Aorta (tissue), 5 donors: ENCODE measurements at regions of chr1 and their contacts with region 1.

Region 1: DNA sequence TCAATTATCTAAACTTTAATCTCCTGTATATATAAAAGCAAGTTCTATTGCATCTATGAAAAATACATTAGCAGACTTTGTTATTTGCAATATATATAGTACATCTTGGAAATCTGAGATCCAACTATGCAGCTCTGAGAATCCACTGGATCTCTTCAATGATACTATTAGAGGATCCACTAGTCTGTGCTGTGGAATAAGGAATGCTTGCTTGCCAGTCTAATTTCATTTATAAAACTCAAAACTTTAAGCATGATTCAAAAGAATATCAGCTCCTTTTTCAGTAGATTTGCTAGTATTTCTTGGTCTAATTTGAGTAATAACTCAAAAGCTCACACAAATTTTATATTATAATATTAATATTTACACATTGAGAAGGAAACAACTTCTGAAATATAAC is 115.1 kb downstream of the SPATA6 start:
- DNase-seq: no peak
- ATAC-seq: no peak
- H3K4me3 ChIP-seq: no peak overlapping the region
- H3K27ac ChIP-seq: no peak overlapping the region
- H3K4me1 ChIP-seq: no peaks in the 10 kb centered on the region
- H3K27me3 ChIP-seq: no peaks in the 10 kb centered on the region

Region 2: DNA sequence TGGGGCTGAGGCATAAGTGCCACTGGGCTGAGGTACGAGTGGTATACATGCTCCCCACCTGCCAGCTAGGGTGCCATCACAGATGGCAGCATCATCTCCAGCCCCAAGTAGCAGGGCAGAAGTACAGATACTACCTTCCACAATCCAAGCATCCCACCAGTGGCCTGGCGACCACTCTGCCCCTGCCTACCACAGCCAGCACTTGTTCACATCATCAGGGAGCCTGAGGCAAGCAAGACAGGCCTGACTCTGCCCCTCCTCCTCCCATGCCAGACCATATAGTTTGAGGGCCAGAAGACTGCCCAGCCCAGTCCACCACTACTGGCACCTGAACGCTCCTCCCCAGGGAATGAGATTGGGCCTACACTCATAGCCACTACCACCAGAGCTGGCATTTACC is 30.5 kb after region 1 on chr1:
- intact Hi-C with region 1: no loop called
- DNase-seq: no peak
- ATAC-seq: no peak
- H3K4me3 ChIP-seq: no peak overlapping the region
- H3K27ac ChIP-seq: no peak overlapping the region
- H3K4me1 ChIP-seq: no peaks in the 10 kb centered on the region
- H3K27me3 ChIP-seq: no peaks in the 10 kb centered on the region

Region 3: DNA sequence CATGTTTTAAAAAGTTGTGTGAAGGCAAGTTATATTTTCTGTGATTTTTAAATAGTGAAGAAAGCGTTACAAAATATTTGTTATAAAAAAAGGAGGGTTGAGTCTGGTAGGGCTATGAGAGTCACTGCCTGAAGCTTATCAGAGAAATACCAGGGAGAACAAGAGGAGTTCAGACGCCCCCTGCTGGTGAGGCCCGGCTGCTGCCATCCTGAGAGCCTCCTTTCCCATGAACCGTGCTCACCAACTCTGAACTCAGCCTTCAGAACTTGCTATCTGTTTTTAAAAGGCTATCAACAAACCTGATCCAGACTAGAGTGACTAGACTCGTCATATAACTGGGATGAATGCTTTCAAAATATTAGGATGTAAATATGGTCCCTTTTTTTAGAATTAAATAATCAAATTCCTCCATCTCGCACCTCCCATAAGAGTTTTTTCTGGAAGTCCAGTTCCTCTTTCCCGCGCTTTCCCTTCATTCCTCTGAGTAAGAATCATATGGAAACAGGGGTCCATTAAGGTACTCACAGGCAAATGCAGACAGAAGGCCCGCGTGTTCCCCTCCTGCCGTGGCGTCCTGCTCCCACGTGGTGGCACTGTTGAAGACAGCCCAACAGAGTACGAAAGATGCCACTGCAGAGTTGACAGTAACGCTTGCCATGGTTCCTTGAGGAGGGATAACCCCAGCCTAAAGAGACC is 141.3 kb after region 1 on chr1:
- intact Hi-C with region 1: loop called in 1 of 2 experiments (anchors 10 kb)
- DNase-seq: peak; percentile 85 to 93
- ATAC-seq: peak; percentile 91
- H3K4me3 ChIP-seq: no peak overlapping the region
- H3K27ac ChIP-seq: no peak overlapping the region
- H3K4me1 ChIP-seq: peaks cover 0 to 2% of the 10 kb centered on the region in 2 donors
- H3K27me3 ChIP-seq: no peaks in the 10 kb centered on the region